ENCODE measurements at regions of chr18 and their contacts with region 1.

Region 1: GRCh38 chr18:49258938-49259337 is 201.5 kb downstream of the DYM start:
- DNase-seq: no peak
- CTCF ChIP-seq: no peak

Region 2: GRCh38 chr18:49212819-49213218 is 46.1 kb before region 1 on chr18:
- CTCF ChIA-PET with region 1: no interaction called
- POLR2A ChIA-PET with region 1: no interaction called
- DNase-seq: no peak
- CTCF ChIP-seq: no peak

Region 3: DNA sequence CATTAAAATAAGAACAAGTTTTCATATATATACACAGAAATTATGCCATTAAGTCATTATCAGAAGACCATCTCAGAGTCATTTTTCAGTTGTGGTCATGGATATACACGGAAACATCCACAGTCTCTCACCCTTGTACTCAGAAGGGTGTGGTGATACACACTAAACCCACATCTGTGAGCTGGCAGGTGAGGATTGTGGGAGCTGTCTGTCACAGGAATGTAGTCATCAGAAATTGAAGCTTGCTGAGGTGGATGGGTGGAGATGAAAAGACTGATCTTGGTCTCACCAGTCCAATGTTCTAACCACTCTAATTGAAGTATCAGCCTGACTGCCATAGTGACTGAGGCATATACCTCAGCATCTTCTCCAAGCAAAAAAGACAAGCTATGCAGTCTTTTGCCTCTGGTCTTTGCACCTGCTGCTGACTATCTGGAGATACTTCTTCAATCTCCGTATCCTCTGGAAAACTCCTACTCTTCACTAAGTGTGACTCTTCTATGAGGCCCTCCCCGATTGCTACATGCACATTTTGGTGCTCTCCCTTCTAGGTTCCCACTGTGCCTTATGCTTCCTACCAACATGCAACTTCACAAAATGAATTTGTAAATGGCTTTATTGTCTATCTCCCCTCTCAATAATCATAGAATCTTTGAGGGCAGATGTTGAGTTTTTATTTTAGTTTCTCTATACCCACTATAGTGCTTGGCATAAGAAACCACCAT is 31.3 kb before region 1 on chr18:
- CTCF ChIA-PET with region 1: no interaction called
- POLR2A ChIA-PET with region 1: interaction called, 12 read pairs
- DNase-seq: no peak
- CTCF ChIP-seq: no peak

Region 4: DNA sequence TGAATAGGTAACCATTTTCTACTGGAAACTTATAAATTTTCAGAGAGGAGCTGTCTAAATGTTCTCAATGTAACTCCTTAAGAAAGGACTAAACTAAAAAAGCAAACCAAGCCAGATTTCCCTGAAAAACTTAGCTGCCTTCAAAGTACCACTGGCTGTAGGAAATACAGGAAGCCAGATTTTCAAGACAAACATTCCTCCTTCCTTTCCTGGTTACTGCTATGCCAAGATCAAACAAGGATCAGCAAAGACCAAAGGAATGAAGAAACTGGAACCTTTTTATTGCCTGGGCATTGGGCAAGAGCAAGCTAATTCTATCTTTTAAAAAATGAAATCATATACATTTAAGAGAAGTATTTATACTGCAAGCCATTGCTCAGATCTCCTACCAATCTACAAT is 11.2 kb before region 1 on chr18:
- CTCF ChIA-PET with region 1: no interaction called
- POLR2A ChIA-PET with region 1: no interaction called
- DNase-seq: no peak
- CTCF ChIP-seq: no peak

Region 5: GRCh38 chr18:49274188-49274714 is 15.3 kb after region 1 on chr18:
- CTCF ChIA-PET with region 1: no interaction called
- POLR2A ChIA-PET with region 1: no interaction called
- DNase-seq: no peak
- CTCF ChIP-seq: no peak

Region 6: GRCh38 chr18:49784427-49785185 is 525.7 kb after region 1 on chr18:
- CTCF ChIA-PET with region 1: no interaction called
- POLR2A ChIA-PET with region 1: no interaction called
- DNase-seq: no peak
- CTCF ChIP-seq: peak; percentile 2

Measured in GM10248 (cell line).